Endothelial cell of umbilical vein (primary cell): ENCODE measurements at regions of chr1 and their contacts with region 1.

Region 1: DNA sequence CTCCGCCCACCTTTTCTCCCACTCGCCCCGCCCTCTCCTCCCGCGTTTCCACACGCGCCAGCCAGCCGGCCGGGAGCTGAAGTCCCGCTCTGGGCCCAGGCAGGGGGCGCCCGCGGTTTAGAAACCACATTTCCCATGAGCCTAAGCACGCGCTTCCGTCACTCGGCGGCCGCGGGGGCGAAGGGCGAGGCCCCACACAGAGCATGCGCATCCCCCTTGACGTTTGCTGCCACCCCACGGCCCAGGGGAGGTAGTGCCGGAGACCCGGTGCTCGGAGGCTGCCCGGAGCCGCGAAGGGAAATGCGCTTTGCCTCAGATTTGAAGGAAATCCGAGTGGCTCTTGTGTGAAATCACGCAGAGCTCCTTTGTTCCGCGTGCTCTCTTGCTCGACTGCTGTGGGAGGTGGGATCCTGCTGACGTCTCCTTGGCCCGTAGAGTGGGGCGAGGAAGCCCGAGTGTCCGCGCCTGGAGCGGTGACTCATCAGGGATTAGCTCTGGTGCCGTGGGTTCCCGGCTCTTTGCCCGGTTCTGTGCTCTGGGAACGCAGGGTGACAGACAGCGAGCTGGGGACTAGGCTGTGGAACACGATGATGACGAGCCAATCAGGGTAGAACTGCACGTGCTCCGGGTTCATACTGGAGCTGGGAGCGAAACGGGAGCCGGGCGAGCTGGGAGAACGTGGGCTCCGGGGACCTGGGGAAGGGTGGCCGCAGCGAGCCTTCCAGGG is 407 bp upstream of the B3GALNT2 start:
- DNase-seq: peak; percentile 100
- H3K4me3 ChIP-seq: peak overlapping the region; percentile 14 to 80 (median 41)
- H3K27ac ChIP-seq: peak overlapping the region; percentile 71
- H3K4me1 ChIP-seq: peaks cover 9% of the 10 kb centered on the region
- H3K27me3 ChIP-seq: no peaks in the 10 kb centered on the region
- CTCF ChIP-seq: peak; percentile 87 to 92
- POLR2A ChIP-seq: peak; percentile 53

Region 2: DNA sequence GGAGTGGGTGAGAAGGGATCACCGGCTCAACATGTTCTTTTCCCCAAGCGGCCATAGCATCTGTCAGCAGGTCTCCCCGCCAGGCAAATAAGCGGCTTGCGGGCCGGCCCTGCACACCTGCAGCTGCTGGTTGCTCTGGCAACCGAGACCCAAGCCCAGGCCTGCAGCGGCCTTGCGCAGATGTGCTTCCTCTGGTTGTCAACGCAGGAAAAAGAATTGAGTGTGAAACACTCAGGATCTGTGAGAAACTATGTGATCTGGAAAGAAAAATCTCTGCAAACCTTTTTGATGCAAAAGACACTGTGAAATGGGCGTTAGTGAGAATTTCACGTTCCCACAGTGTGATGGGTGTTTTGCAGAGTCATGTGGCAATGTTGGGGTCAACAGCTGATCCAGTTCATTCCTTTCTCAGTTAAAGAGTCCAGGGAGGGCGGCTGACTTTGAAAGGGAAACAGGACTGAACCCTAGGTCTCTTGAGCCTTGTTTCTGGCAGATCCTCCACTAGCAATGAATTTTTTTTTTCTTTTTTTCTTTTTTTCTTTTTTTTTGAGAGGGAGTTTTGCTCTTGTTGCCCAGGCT is 404.4 kb before region 1 on chr1:
- CTCF ChIA-PET with region 1: no interaction called
- POLR2A ChIA-PET with region 1: no interaction called
- dilution Hi-C with region 1: no loop called
- intact Hi-C with region 1: loop called (anchors 5 kb)
- DNase-seq: no peak
- H3K4me3 ChIP-seq: no peak overlapping the region
- H3K27ac ChIP-seq: no peak overlapping the region
- H3K4me1 ChIP-seq: peaks cover 3% of the 10 kb centered on the region
- H3K27me3 ChIP-seq: peaks cover 0 to 3% of the 10 kb centered on the region in 2 experiments
- CTCF ChIP-seq: no peak
- POLR2A ChIP-seq: no peak

Region 3: DNA sequence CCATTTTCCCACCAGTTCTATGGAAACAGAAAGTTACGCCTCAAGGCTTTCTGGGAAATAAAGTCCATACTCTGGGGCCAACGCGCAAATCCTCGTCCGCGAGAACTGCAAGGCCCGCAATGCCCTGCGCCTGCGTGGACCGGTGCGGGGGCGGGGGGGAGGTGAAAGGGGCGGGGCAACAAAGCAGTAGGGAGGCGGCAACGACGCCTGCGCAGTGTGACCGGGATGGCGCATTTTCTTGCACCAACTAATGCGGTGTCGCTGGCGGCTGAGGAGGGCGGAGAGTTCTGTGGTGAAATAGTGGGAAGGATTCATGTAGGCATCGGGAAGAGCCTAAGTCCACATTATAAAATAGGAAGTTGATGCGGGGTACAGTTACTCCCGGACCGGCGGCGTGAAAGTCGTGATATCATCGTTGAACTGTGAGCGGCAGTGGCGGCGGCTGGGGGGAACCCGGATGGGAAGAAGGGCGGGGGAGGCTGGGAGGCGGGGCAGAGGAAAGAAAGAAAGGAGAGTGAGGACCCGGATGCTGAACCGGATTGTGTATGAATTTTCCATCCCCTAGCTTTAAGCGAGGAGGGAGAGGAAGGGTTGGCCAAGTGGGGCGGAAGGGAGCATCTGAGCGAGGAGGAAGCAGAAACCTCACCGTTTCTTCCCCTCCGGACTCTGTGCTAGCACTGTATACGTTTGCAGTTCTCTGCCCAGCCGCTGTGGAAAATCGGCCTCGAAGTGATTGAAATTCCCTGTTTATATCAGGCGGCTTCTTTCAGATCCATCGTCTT is 176.1 kb before region 1 on chr1 and contains the start of gene GGPS1:
- CTCF ChIA-PET with region 1: no interaction called
- POLR2A ChIA-PET with region 1: interaction called, 3 read pairs
- dilution Hi-C with region 1: no loop called
- intact Hi-C with region 1: loop called (anchors 2 kb)
- DNase-seq: peak; percentile 100
- H3K4me3 ChIP-seq: peak within 1 kb of the TSS; percentile 89 to 93 (median 92)
- H3K27ac ChIP-seq: peak within 1 kb of the TSS; percentile 86
- H3K4me1 ChIP-seq: peaks cover 28% of the 10 kb centered on the region
- H3K27me3 ChIP-seq: no peaks in the 10 kb centered on the region
- CTCF ChIP-seq: no peak
- POLR2A ChIP-seq: peak; percentile 96
- total RNA-seq, gene GGPS1: 24.8 and 29.5 TPM in 2 replicates

Region 4: GRCh38 chr1:235351898-235352297 is 152.8 kb before region 1 on chr1:
- CTCF ChIA-PET with region 1: no interaction called
- POLR2A ChIA-PET with region 1: no interaction called
- dilution Hi-C with region 1: no loop called
- intact Hi-C with region 1: no loop called
- DNase-seq: no peak
- H3K4me3 ChIP-seq: no peak overlapping the region
- H3K27ac ChIP-seq: no peak overlapping the region
- H3K4me1 ChIP-seq: no peaks in the 10 kb centered on the region
- H3K27me3 ChIP-seq: no peaks in the 10 kb centered on the region
- CTCF ChIP-seq: no peak
- POLR2A ChIP-seq: no peak

Region 5: GRCh38 chr1:235470741-235471439 is 33.8 kb before region 1 on chr1:
- CTCF ChIA-PET with region 1: interaction called, 5 read pairs
- POLR2A ChIA-PET with region 1: no interaction called
- dilution Hi-C with region 1: no loop called
- intact Hi-C with region 1: loop called (anchors 2 kb)
- DNase-seq: peak; percentile 56
- H3K4me3 ChIP-seq: no peak overlapping the region
- H3K27ac ChIP-seq: no peak overlapping the region
- H3K4me1 ChIP-seq: peaks cover 32% of the 10 kb centered on the region
- H3K27me3 ChIP-seq: no peaks in the 10 kb centered on the region
- CTCF ChIP-seq: no peak
- POLR2A ChIP-seq: no peak

Region 6: DNA sequence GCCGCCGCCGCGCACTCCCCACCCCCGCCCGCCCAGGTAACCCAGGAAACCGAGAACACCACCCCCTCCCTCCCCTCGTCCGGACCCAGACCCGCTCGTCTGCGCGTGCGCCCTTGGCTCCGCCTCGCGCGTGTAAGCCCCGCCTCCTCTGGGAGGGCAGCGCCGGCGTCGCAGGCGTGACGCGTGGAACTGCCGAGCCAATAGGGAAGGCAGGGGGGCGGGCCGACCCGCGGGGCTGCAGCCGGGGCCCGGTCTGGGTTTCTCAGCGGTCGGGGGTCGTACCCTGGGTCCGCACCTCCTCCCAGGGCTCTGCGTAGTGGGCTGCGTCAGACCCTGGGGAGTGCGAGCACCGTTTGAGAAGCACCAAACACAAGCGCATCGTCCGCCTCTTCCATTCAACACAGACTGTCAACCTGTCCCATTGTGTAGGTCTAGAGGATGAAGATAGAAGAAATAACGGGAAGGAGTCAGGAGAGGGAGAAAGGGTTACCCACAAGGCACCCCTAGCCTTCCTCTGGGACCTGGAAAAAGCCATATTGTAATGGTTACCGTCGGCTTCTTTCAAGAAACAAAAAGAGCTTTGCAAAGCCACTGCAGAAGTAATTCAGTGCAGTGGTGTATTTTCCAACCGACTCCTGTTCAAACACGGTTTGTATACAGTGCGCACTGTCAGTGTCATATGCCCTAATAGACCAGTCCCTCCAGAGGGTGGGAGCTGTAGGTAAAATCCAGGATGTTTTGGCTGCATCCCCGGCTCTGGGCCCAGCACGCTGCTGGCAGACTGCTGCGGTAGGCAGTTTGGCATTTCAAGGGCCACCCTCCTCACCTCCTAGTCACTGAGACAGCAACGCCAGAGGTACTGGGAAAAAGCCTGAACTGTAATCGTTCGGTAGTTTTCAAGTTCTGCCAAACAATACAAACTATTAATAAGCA is 362.5 kb after region 1 on chr1:
- CTCF ChIA-PET with region 1: no interaction called
- POLR2A ChIA-PET with region 1: no interaction called
- dilution Hi-C with region 1: no loop called
- intact Hi-C with region 1: loop called (anchors 1 kb)
- DNase-seq: peak; percentile 92
- H3K4me3 ChIP-seq: peak overlapping the region; percentile 60 to 97 (median 61)
- H3K27ac ChIP-seq: peak overlapping the region; percentile 1
- H3K4me1 ChIP-seq: peaks cover 13% of the 10 kb centered on the region
- H3K27me3 ChIP-seq: peaks cover 0 to 2% of the 10 kb centered on the region in 2 experiments
- CTCF ChIP-seq: no peak
- POLR2A ChIP-seq: peak; percentile 85

Region 7: GRCh38 chr1:236281654-236282424 is 777.2 kb after region 1 on chr1 and contains the start of gene ERO1B:
- CTCF ChIA-PET with region 1: no interaction called
- POLR2A ChIA-PET with region 1: no interaction called
- dilution Hi-C with region 1: no loop called
- intact Hi-C with region 1: loop called (anchors 1 kb)
- DNase-seq: peak; percentile 95
- H3K4me3 ChIP-seq: peak within 1 kb of the TSS; percentile 39 to 99 (median 65)
- H3K27ac ChIP-seq: no peak within 1 kb of the TSS
- H3K4me1 ChIP-seq: peaks cover 3% of the 10 kb centered on the region
- H3K27me3 ChIP-seq: peaks cover 16 to 22% of the 10 kb centered on the region in 2 experiments
- CTCF ChIP-seq: peak in 1 of 2 donors; percentile 2
- POLR2A ChIP-seq: peak; percentile 21
- total RNA-seq, gene ERO1B: 3.6 and 5.1 TPM in 2 replicates